Aorta (tissue), 5 donors: ENCODE measurements at regions of chr15 and their contacts with region 1.

Region 1: DNA sequence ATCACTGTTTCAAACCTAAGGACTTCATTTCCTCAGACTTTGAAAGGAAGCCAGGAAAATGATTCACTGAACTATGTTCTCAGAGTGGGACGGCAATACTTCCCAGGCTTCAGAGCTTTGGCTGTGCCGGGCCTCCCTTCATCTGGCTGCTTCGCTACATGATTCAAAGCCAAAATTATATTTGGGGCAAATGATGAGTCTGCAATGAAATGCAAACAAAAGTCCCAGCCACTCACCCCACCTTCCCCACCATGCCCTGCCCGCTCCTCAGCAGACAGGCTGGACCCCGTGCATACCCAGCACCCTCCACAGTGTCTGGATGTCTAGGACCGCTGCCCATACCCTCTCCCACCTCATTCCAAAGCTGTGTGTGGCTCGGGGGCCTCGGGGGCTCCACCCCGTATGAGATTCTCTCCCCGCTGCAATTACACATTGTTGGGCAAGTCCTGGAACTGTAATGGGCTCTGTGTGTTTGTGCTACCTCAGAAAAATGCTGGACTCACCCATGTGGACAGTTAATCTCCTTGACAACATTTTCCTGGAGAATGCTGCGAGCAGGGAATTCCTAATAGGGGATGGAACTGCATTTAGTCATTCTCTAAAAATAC is 32.2 kb downstream of the ATP10A start:
- DNase-seq: peak; percentile 88 to 93
- ATAC-seq: peak; percentile 90
- H3K4me3 ChIP-seq: no peak overlapping the region
- H3K27ac ChIP-seq: peak overlapping the region; percentile 34 to 98
- H3K4me1 ChIP-seq: peaks cover 9 to 11% of the 10 kb centered on the region in 2 donors
- H3K27me3 ChIP-seq: no peaks in the 10 kb centered on the region

Region 2: GRCh38 chr15:25478313-25478712 is 352.6 kb before region 1 on chr15:
- intact Hi-C with region 1: no loop called
- DNase-seq: no peak
- ATAC-seq: no peak
- H3K4me3 ChIP-seq: no peak overlapping the region
- H3K27ac ChIP-seq: no peak overlapping the region
- H3K4me1 ChIP-seq: peaks cover 0 to 6% of the 10 kb centered on the region in 2 donors
- H3K27me3 ChIP-seq: no peaks in the 10 kb centered on the region

Region 3: DNA sequence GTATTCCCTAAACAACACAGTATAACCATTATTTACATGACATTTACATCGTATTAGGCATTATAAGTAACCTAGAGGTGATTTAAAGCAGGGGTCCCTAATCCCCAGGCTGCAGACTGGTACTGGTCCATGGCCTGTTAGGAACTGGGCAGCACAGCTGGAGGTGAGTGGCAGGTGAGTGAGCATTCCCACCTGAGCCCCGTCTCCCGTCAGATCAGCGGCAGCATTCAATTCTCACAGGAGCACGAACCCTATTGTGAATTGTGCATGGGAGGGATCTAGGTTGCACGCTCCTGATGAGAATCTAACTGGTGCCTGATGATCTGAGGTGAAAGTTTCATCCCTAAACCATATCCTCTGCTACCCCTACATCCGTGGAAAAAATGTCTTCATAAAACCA is 106.0 kb before region 1 on chr15:
- intact Hi-C with region 1: loop called in 1 of 2 experiments (anchors 5 kb)
- DNase-seq: no peak
- ATAC-seq: no peak
- H3K4me3 ChIP-seq: no peak overlapping the region
- H3K27ac ChIP-seq: no peak overlapping the region
- H3K4me1 ChIP-seq: no peaks in the 10 kb centered on the region
- H3K27me3 ChIP-seq: no peaks in the 10 kb centered on the region

Region 4: GRCh38 chr15:25739687-25740121 is 91.2 kb before region 1 on chr15:
- intact Hi-C with region 1: loop called in 1 of 2 experiments (anchors 5 kb)
- DNase-seq: no peak
- ATAC-seq: no peak
- H3K4me3 ChIP-seq: no peak overlapping the region
- H3K27ac ChIP-seq: peak overlapping the region in 1 of 2 donors; percentile 56
- H3K4me1 ChIP-seq: peaks cover 0 to 22% of the 10 kb centered on the region in 2 donors
- H3K27me3 ChIP-seq: no peaks in the 10 kb centered on the region

Region 5: GRCh38 chr15:25790000-25790660 is 40.8 kb before region 1 on chr15:
- intact Hi-C with region 1: loop called in 1 of 2 experiments (anchors 5 kb)
- DNase-seq: peak in 1 of 2 donors; percentile 80
- ATAC-seq: peak; percentile 68
- H3K4me3 ChIP-seq: no peak overlapping the region
- H3K27ac ChIP-seq: peak overlapping the region in 1 of 2 donors; percentile 11
- H3K4me1 ChIP-seq: peaks cover 4 to 8% of the 10 kb centered on the region in 2 donors
- H3K27me3 ChIP-seq: no peaks in the 10 kb centered on the region

Region 6: GRCh38 chr15:25850154-25851111 is 19.5 kb after region 1 on chr15:
- intact Hi-C with region 1: loop called in 1 of 2 experiments (anchors 2 kb)
- DNase-seq: peak; percentile 94 to 95
- ATAC-seq: peak; percentile 92
- H3K4me3 ChIP-seq: peak overlapping the region in 1 of 2 donors; percentile 35
- H3K27ac ChIP-seq: peak overlapping the region; percentile 98 to 99
- H3K4me1 ChIP-seq: peaks cover 0 to 14% of the 10 kb centered on the region in 2 donors
- H3K27me3 ChIP-seq: no peaks in the 10 kb centered on the region